ENCODE measurements at regions of chr9 and their contacts with region 1.

Region 1: GRCh38 chr9:127857791-127858512 is 3.5 kb upstream of the ENG start:
- DNase-seq: no peak
- ATAC-seq: no peak

Region 2: GRCh38 chr9:127351182-127352166 is 506.5 kb before region 1 on chr9:
- intact Hi-C with region 1: no loop called
- DNase-seq: no peak
- ATAC-seq: no peak

Region 3: GRCh38 chr9:127519301-127520166 is 338.4 kb before region 1 on chr9:
- intact Hi-C with region 1: no loop called
- DNase-seq: peak; percentile 50
- ATAC-seq: peak; percentile 22

Region 4: GRCh38 chr9:127763918-127764384 is 94.0 kb before region 1 on chr9:
- intact Hi-C with region 1: loop called (anchors 5 kb)
- DNase-seq: peak; percentile 83
- ATAC-seq: peak; percentile 66

Region 5: GRCh38 chr9:127828262-127829031 is 29.5 kb before region 1 on chr9:
- intact Hi-C with region 1: loop called (anchors 2 kb)
- DNase-seq: peak; percentile 92
- ATAC-seq: peak; percentile 93

Region 6: DNA sequence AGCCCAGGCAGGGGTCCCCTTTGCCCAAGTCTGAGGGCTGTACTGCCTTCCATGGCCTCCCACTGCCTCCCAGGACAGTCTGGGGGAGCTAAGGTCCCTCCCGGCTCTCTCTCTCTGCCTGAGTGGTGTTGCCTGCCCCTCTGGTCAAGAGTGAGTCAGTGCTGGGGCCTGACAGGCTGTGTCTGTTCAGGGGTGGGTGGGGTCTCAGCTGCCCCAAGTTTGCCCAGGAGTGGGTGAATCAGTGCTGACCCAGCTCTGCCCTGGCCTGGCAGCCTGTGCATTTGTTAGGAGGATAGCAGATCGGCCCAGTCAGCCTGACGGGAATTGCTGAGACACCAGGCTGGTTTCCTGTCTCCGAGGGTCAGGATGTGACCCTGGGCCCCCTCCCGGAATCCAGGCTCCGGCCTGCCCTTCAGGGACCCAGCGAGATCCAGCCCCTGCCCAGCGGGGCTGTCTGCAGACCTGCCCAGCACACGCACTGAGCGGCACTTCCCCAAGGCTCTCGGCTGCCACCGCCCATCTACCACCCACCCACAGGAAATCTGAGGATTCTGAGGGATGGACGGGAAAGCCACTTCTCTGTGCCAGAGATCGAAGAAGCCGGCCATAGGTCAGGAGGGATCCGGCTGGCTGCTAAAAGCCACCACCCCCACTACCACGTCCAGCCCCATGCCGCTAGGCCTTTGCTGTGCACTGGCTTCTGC is 19.4 kb before region 1 on chr9:
- intact Hi-C with region 1: loop called (anchors 2 kb)
- DNase-seq: peak; percentile 88
- ATAC-seq: peak; percentile 77

Region 7: DNA sequence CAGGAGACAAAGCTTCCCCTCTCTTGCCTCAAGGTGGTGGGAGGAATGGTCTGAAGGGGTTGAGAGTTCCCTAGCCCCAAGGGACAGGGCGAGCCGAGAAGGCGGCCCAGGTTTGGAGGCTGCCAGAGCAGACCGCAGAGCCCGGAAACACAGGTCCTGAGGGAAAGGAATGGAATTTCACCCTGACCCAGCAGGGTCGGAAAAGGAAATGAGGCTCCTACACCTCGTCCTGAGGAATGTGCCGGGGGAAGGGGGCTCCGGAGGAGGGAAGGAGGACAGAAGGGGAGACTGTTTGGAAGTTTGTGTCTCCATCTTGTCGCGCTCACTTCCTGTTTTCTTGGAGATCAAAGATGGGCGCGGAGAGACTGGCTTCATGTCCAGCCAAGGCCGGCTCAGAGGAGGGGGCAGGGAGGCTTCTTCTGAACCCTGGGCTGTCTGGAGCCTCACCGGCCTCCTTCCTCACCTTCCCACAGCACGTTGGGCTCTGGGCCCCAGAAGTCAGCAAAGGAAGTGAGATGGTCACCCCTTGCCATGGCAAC is 13.1 kb before region 1 on chr9:
- intact Hi-C with region 1: loop called (anchors 1 kb)
- DNase-seq: no peak
- ATAC-seq: peak; percentile 27

Region 8: GRCh38 chr9:127937388-127938280 is 79.7 kb after region 1 on chr9 and contains the start of gene DPM2:
- intact Hi-C with region 1: no loop called
- DNase-seq: peak; percentile 91
- ATAC-seq: peak; percentile 89
- total RNA-seq, gene DPM2: 11.9 TPM